Caco-2 (cell line): ENCODE measurements at regions of chr1 and their contacts with region 1.

Region 1: GRCh38 chr1:85544689-85545215 is 35.8 kb upstream of the CCN1 start:
- DNase-seq: peak; percentile 62 to 67
- H3K4me3 ChIP-seq: no peak overlapping the region
- H3K4me3 Mint-ChIP-seq: peak overlapping the region; percentile 50
- H3K27ac Mint-ChIP-seq: peak overlapping the region; percentile 94
- H3K4me1 ChIP-seq: peaks cover 28% of the 10 kb centered on the region
- H3K4me1 Mint-ChIP-seq: peaks cover 15% of the 10 kb centered on the region
- H3K27me3 ChIP-seq: no peaks in the 10 kb centered on the region
- H3K27me3 Mint-ChIP-seq: no peaks in the 10 kb centered on the region
- CTCF ChIP-seq: no peak

Region 2: DNA sequence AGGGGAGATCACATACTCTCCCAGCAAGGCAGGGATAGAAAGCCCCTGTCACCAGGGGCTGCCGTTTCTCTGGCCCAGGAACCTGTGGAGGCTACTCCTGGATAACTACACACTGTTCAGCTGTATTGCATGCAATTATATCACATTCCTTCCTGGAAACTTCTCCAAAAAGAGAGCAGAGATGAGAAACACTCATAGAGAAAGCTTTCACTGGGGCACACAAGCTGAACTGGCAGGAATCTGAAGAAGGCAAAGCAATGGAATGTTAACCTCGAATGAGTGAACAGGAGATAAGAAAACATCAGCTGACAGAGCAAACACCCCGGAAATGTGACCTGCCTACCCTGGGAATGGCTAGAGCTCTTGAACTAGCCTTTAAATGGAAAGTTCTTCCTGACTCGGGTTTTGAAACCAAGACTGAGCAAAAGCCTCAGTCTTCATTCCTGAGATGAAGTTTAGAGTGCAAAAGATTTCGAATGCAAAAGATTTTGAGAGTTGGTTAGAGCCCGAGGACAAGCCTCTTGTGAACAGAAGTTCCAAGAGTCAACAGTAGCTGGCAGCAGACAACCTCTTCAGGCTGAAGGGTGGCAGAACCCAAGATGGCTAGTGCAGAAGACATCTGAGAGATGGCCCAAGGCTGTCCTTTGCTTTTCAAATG is 68.1 kb after region 1 on chr1:
- CTCF ChIA-PET with region 1: no interaction called
- POLR2A ChIA-PET with region 1: no interaction called
- intact Hi-C with region 1: loop called (anchors 2 kb)
- DNase-seq: peak; percentile 60 to 69
- H3K4me3 ChIP-seq: no peak overlapping the region
- H3K4me3 Mint-ChIP-seq: peak overlapping the region; percentile 70
- H3K27ac Mint-ChIP-seq: peak overlapping the region; percentile 96
- H3K4me1 ChIP-seq: peaks cover 47% of the 10 kb centered on the region
- H3K4me1 Mint-ChIP-seq: peaks cover 47% of the 10 kb centered on the region
- H3K27me3 ChIP-seq: no peaks in the 10 kb centered on the region
- H3K27me3 Mint-ChIP-seq: no peaks in the 10 kb centered on the region
- CTCF ChIP-seq: peak; percentile 35 to 41